Activated CD4-positive, alpha-beta memory T cell treated with anti-CD3 and anti-CD28 coated beads, Interleukin-2, amount 10 ng/mL, durations not matched to agents 7 days and 5 days (primary cell): ENCODE measurements at regions of chrX and their contacts with region 1.

Region 1: GRCh38 chrX:79366873-79367749 is at the start of gene ITM2A:
- DNase-seq: peak; percentile 62
- H3K4me3 Mint-ChIP-seq: peak within 1 kb of the TSS; percentile 94
- H3K27ac Mint-ChIP-seq: peak within 1 kb of the TSS; percentile 95
- H3K4me1 Mint-ChIP-seq: peaks cover 24% of the 10 kb centered on the region
- H3K27me3 Mint-ChIP-seq: no peaks in the 10 kb centered on the region
- total RNA-seq, gene ITM2A: 145 to 157 TPM

Region 2: GRCh38 chrX:79153348-79153747 is 213.8 kb before region 1 on chrX:
- CTCF ChIA-PET with region 1: no interaction called
- POLR2A ChIA-PET with region 1: interaction called, 10 read pairs
- DNase-seq: no peak
- H3K4me3 Mint-ChIP-seq: peak overlapping the region; percentile 71
- H3K27ac Mint-ChIP-seq: peak overlapping the region; percentile 83
- H3K4me1 Mint-ChIP-seq: peaks cover 73% of the 10 kb centered on the region
- H3K27me3 Mint-ChIP-seq: no peaks in the 10 kb centered on the region

Region 3: DNA sequence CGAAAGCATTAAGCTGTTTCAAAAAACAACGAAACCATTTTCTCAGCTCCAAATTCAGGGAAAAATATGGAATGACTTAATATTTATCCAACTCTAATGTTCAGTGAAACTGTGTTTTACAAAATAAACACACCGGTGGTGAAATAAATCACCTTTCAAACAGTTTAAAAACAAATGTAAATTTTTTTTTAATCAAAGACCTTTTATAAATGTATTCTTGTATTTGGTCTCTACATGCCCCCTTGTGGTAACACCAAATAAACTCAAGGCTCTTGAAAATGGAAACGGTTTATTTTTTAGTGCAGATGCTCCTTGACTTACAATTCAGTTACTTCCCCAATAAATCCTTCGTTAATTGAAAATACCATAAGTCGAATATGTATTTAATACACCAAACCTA is 45.9 kb after region 1 on chrX:
- CTCF ChIA-PET with region 1: interaction called, 7 read pairs
- POLR2A ChIA-PET with region 1: interaction called, 11 read pairs
- DNase-seq: no peak
- H3K4me3 Mint-ChIP-seq: peak overlapping the region; percentile 67
- H3K27ac Mint-ChIP-seq: no peak overlapping the region
- H3K4me1 Mint-ChIP-seq: peaks cover 30% of the 10 kb centered on the region
- H3K27me3 Mint-ChIP-seq: no peaks in the 10 kb centered on the region